ENCODE measurements at regions of chr9 and their contacts with region 1.

Region 1: GRCh38 chr9:77977210-77977611 is 54.4 kb downstream of the GNAQ start:
- DNase-seq: peak; percentile 54
- H3K4me3 Mint-ChIP-seq: no peak overlapping the region
- H3K27ac Mint-ChIP-seq: no peak overlapping the region
- H3K4me1 Mint-ChIP-seq: peaks cover 28% of the 10 kb centered on the region
- H3K27me3 Mint-ChIP-seq: no peaks in the 10 kb centered on the region
- CTCF ChIP-seq: no peak

Region 2: DNA sequence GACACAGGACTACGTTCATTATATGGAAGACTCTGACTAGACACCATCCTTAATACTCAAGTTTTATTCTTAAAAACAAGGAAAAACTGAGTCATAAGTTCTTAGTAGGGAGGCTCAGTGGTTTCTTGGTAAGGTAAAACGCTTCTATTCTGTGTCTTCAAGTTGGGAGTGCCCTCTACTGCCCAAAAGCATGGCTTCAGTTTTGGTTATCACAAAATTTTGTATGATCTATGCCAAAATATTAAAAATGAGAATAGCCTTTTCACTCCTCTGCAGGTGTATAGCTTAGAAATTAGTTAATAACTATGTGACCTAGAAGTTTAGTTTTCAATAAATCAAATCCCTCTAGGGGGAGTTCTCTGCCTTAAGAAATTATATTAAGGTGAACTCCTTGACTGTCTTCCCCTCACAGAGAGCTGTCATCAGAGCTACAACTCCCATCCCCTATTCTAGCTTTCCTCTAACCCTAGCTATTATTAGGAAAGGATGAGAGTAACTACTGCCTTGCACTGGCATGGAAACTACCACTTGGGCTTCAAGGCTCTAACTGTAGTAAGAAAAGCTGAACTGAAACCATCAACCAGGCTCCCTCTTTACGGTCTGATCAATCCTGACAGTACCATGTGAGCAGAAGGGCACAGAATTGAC is 135.3 kb before region 1 on chr9:
- CTCF ChIA-PET with region 1: interaction called, 3 read pairs
- intact Hi-C with region 1: loop called (anchors 5 kb)
- DNase-seq: no peak
- H3K4me3 Mint-ChIP-seq: no peak overlapping the region
- H3K27ac Mint-ChIP-seq: no peak overlapping the region
- H3K4me1 Mint-ChIP-seq: peaks cover 23% of the 10 kb centered on the region
- H3K27me3 Mint-ChIP-seq: no peaks in the 10 kb centered on the region
- CTCF ChIP-seq: no peak

Region 3: GRCh38 chr9:78035383-78035993 is 58.3 kb after region 1 on chr9:
- CTCF ChIA-PET with region 1: interaction called, 42 read pairs
- intact Hi-C with region 1: loop called (anchors 2 kb)
- DNase-seq: peak; percentile 47
- H3K4me3 Mint-ChIP-seq: no peak overlapping the region
- H3K27ac Mint-ChIP-seq: no peak overlapping the region
- H3K4me1 Mint-ChIP-seq: peaks cover 20% of the 10 kb centered on the region
- H3K27me3 Mint-ChIP-seq: no peaks in the 10 kb centered on the region
- CTCF ChIP-seq: no peak

Region 4: GRCh38 chr9:78213712-78214111 is 236.5 kb after region 1 on chr9:
- CTCF ChIA-PET with region 1: no interaction called
- intact Hi-C with region 1: loop called (anchors 1 kb)
- DNase-seq: no peak
- H3K4me3 Mint-ChIP-seq: no peak overlapping the region
- H3K27ac Mint-ChIP-seq: no peak overlapping the region
- H3K4me1 Mint-ChIP-seq: no peaks in the 10 kb centered on the region
- H3K27me3 Mint-ChIP-seq: no peaks in the 10 kb centered on the region
- CTCF ChIP-seq: no peak

Region 5: GRCh38 chr9:78221425-78221824 is 244.2 kb after region 1 on chr9:
- CTCF ChIA-PET with region 1: interaction called, 11 read pairs
- intact Hi-C with region 1: no loop called
- DNase-seq: no peak
- H3K4me3 Mint-ChIP-seq: no peak overlapping the region
- H3K27ac Mint-ChIP-seq: no peak overlapping the region
- H3K4me1 Mint-ChIP-seq: no peaks in the 10 kb centered on the region
- H3K27me3 Mint-ChIP-seq: peaks cover 20% of the 10 kb centered on the region
- CTCF ChIP-seq: no peak

Region 6: DNA sequence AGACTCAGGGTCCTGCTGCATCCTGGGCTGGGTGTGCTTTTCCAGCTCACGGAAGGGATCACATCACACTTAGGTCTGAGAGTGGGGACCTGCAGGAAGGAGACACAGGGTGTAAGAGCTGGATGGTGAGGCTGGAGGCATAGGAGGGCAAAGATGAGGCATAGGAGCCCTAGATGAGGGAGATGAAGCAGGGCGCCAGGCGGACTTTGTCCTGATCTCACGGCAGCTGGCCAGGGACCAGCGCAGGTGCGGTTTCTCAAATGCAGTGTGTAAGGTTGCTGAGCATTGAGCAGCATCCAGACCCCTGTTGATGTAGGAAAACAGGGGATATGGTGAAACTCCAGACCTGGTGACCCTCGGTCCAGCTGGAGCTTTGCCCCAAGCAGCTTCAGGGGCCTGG is 476.2 kb after region 1 on chr9:
- CTCF ChIA-PET with region 1: no interaction called
- intact Hi-C with region 1: no loop called
- DNase-seq: no peak
- H3K4me3 Mint-ChIP-seq: no peak overlapping the region
- H3K27ac Mint-ChIP-seq: no peak overlapping the region
- H3K4me1 Mint-ChIP-seq: no peaks in the 10 kb centered on the region
- H3K27me3 Mint-ChIP-seq: peaks cover 29% of the 10 kb centered on the region
- CTCF ChIP-seq: no peak